Esophagus muscularis mucosa (tissue), 4 donors: ENCODE measurements at regions of chr7 and their contacts with region 1.

Region 1: DNA sequence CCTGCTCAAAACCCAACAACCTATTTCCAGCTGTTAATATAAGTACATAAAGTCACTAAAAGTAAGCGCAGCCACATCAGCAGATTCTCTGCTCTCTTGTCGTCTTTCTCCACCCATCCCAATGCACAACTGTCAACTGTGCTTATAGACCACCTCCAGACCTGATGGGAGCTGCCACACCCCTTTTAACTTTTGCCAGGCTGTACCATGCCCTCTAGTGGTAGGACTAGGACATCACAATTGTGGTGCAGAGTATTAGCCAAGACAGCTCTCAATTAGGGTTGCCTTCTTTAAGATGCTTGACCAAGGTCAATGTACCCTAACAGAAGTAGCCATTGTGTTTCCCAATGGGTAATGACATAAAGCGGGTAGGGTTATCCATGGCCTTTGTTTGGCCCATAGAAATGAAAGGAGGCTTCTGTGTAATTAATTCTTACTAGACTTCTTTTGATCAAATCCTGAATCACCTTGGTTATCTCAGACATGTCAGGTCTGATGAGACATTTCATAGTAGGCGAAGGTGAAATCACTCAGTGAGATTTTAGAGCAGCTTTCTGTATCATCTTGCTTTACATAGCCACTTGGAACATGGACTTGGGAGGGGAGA is 68.1 kb downstream of the SCRN1 start:
- DNase-seq: peak; percentile 91
- H3K4me3 ChIP-seq: no peak overlapping the region
- H3K27ac ChIP-seq: no peak overlapping the region
- H3K4me1 ChIP-seq: peaks cover 0 to 4% (median 0%) of the 10 kb centered on the region in 4 donors
- H3K27me3 ChIP-seq: no peaks in the 10 kb centered on the region
- CTCF ChIP-seq: peak; percentile 83 to 86 (median 84)
- EP300 ChIP-seq: no peak
- POLR2A ChIP-seq: no peak

Region 2: DNA sequence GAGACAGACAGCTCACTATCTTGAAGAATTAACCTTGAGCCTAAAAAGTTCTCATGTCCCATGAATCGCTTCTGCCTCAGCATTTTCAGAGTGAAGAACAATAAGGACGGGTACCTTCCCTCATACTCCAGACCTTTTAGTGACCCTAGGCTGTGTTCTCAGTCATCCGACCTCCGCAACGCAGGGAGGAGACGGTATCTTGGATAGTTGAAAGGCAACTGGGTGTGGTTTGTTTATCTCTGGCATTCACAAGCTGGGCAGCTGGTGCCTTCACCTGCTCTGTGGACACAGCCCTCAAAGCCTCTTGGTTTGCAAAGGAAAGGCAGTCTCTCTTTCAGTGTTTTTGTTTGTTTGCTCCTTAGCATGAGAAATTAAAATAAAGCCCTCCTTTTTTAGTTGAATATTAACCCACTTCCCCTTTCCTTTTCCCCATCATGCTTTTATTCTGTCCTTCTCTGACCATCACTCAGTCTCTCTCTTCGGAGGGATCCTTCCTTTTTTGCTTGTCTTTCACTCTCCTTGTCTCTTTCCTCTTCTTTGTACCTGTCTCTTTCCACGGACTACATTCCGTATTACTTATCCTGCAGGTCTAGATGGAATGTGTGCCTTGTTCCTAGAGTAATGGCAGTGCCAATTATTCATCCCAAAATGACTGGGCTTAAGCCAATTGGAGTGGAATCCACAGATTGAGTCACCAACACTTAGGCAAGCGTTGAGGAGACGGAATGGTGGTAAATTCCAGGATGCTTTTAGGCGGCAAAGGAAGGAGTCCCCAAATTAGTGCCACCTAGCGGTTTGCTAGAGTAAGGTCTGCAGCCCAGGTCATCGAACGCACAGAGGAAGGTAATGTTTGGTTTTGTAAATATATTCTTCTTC is 312.1 kb before region 1 on chr7:
- intact Hi-C with region 1: no loop called
- DNase-seq: peak; percentile 53
- H3K4me3 ChIP-seq: no peak overlapping the region
- H3K27ac ChIP-seq: no peak overlapping the region
- H3K4me1 ChIP-seq: peaks cover 0 to 8% (median 1%) of the 10 kb centered on the region in 4 donors
- H3K27me3 ChIP-seq: no peaks in the 10 kb centered on the region
- CTCF ChIP-seq: peak; percentile 24 to 46 (median 43)
- EP300 ChIP-seq: no peak
- POLR2A ChIP-seq: no peak

Region 3: GRCh38 chr7:29639881-29640595 is 281.5 kb before region 1 on chr7:
- intact Hi-C with region 1: loop called (anchors 5 kb)
- DNase-seq: peak; percentile 77
- H3K4me3 ChIP-seq: no peak overlapping the region
- H3K27ac ChIP-seq: no peak overlapping the region
- H3K4me1 ChIP-seq: peaks cover 0 to 6% (median 6%) of the 10 kb centered on the region in 4 donors
- H3K27me3 ChIP-seq: no peaks in the 10 kb centered on the region
- CTCF ChIP-seq: no peak
- EP300 ChIP-seq: no peak
- POLR2A ChIP-seq: no peak

Region 4: DNA sequence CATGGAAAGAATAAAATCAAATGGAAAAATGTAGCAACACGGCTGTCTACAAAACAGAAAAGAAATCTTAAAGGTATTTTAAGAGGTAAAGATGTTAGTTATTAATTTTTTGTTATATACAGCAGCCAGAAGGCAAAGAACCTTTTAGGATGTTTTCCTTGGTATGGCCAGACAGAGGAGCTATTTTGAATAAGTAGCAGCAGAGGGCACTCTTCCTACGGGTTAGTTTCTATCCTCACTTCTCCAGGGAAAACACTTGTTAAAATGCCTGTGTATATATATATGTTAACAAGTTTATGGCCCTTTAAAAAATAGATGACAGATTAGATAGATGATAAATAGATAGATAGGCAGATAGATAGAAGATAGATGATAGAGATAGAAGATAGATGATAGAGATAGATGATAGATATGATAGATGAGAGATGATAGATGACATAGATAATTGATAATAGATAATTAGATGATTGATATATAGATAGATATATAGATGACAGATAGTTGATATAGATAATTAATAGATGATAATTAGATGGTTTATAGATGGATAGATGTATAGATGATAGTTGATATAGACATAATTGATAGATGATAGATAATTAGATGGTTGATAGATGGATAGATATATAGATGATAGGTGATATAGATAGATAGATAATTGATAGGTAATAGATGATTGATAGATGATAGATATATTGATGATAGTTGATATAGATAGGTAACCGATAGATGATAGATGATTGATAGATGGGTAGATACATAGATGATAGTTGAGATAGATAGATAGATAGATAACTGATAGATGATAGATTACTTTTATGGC is 173.0 kb before region 1 on chr7:
- intact Hi-C with region 1: loop called (anchors 2 kb)
- DNase-seq: no peak
- H3K4me3 ChIP-seq: no peak overlapping the region
- H3K27ac ChIP-seq: no peak overlapping the region
- H3K4me1 ChIP-seq: peaks cover 0 to 7% (median 5%) of the 10 kb centered on the region in 4 donors
- H3K27me3 ChIP-seq: no peaks in the 10 kb centered on the region
- CTCF ChIP-seq: peak; percentile 38 to 60 (median 51)
- EP300 ChIP-seq: no peak
- POLR2A ChIP-seq: no peak